Pancreas (tissue), 10 donors: ENCODE measurements at regions of chr15 and their contacts with region 1.

Region 1: DNA sequence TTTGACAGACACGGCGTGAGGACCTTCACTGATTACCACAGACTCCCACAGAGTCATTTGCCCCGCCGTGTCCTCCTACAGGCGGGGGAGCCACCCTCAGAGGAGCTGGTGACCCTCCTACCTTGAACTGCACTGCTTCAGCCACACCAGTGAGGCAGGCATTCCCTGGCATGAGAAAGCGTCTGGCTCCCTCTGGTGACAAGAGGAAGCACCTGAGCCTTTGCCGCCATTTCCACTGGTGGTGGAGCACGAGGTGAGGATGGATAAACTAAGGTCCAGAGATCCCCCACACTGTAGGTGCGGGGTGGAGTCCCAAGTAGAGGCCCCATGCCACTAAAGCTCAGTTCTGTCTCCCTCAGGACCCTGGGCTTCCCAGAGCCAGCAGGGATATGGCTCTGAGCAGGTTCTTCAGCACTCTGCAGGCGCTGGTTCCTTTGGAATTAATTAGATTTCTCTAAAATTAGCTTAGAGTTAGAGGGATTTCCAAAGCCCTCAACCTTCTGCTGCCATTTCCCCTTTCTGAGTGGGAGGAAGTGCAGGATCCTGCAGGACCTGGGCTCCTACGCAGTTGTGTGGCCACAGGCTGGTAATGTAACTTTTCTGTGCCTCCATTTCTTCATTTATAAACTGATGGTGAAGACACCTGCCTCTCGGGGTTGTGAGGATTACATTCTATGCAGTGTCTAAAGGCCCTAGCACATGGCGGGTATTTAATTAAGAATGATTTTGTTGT is 224.0 kb downstream of the SLCO3A1 start:
- DNase-seq: peak; percentile 40 to 80 (median 67)
- ATAC-seq: peak; percentile 77 to 89 (median 84)
- H3K4me3 ChIP-seq: no peak overlapping the region
- H3K27ac ChIP-seq: no peak overlapping the region
- H3K4me1 ChIP-seq: no peaks in the 10 kb centered on the region
- H3K27me3 ChIP-seq: no peaks in the 10 kb centered on the region
- CTCF ChIP-seq: peak; percentile 12 to 65 (median 54)

Region 2: DNA sequence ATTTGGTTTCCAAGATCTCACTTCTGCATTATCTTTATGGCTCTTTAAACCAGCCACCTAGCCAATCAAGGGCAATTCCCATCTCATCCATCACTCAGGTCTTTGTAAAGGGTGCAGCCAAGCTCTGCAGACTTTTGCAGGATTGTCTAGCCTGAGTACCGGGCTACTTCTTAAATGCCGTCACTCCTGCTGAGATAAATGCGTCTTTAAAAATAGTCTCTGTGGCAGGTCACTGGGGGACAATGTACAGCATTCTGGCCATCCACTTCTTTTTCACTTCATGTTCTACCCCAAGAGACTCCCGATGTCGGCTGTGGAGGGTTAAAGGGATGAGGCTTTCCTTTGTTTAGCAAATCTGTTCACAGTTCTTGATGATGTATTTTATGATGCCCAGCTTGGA is 782.7 kb before region 1 on chr15:
- intact Hi-C with region 1: loop called in 1 of 3 experiments (anchors 5 kb)
- DNase-seq: no peak
- ATAC-seq: no peak
- H3K4me3 ChIP-seq: no peak overlapping the region
- H3K27ac ChIP-seq: no peak overlapping the region
- H3K4me1 ChIP-seq: no peaks in the 10 kb centered on the region
- H3K27me3 ChIP-seq: peaks cover 0 to 3% (median 0%) of the 10 kb centered on the region in 4 donors
- CTCF ChIP-seq: no peak

Region 3: GRCh38 chr15:91308199-91308598 is 769.3 kb before region 1 on chr15:
- intact Hi-C with region 1: loop called in 1 of 3 experiments (anchors 5 kb)
- DNase-seq: no peak
- ATAC-seq: no peak
- H3K4me3 ChIP-seq: no peak overlapping the region
- H3K27ac ChIP-seq: no peak overlapping the region
- H3K4me1 ChIP-seq: no peaks in the 10 kb centered on the region
- H3K27me3 ChIP-seq: no peaks in the 10 kb centered on the region
- CTCF ChIP-seq: no peak

Region 4: GRCh38 chr15:91706322-91707032 is 371.0 kb before region 1 on chr15:
- intact Hi-C with region 1: loop called in 1 of 3 experiments (anchors 10 kb)
- DNase-seq: peak; percentile 34 to 69 (median 58)
- ATAC-seq: peak in 3 of 4 donors; percentile 77 to 89 (median 87)
- H3K4me3 ChIP-seq: no peak overlapping the region
- H3K27ac ChIP-seq: no peak overlapping the region
- H3K4me1 ChIP-seq: no peaks in the 10 kb centered on the region
- H3K27me3 ChIP-seq: no peaks in the 10 kb centered on the region
- CTCF ChIP-seq: peak; percentile 55 to 78 (median 74)

Region 5: GRCh38 chr15:91965501-91966184 is 111.9 kb before region 1 on chr15:
- intact Hi-C with region 1: loop called in 1 of 3 experiments (anchors 10 kb)
- DNase-seq: no peak
- ATAC-seq: peak in 1 of 4 donors; percentile 38
- H3K4me3 ChIP-seq: no peak overlapping the region
- H3K27ac ChIP-seq: no peak overlapping the region
- H3K4me1 ChIP-seq: no peaks in the 10 kb centered on the region
- H3K27me3 ChIP-seq: no peaks in the 10 kb centered on the region
- CTCF ChIP-seq: no peak